AG04450 (cell line): ENCODE measurements at regions of chr11 and their contacts with region 1.

Region 1: GRCh38 chr11:66268283-66268951 is at the start of gene RAB1B:
- DNase-seq: peak; percentile 98
- H3K4me3 ChIP-seq: peak within 1 kb of the TSS; percentile 91
- H3K27ac ChIP-seq: peak within 1 kb of the TSS; percentile 89
- H3K27me3 ChIP-seq: no peaks in the 10 kb centered on the region
- CTCF ChIP-seq: no peak
- polyA plus RNA-seq, gene RAB1B: 127 and 183 TPM in 2 replicates

Region 2: DNA sequence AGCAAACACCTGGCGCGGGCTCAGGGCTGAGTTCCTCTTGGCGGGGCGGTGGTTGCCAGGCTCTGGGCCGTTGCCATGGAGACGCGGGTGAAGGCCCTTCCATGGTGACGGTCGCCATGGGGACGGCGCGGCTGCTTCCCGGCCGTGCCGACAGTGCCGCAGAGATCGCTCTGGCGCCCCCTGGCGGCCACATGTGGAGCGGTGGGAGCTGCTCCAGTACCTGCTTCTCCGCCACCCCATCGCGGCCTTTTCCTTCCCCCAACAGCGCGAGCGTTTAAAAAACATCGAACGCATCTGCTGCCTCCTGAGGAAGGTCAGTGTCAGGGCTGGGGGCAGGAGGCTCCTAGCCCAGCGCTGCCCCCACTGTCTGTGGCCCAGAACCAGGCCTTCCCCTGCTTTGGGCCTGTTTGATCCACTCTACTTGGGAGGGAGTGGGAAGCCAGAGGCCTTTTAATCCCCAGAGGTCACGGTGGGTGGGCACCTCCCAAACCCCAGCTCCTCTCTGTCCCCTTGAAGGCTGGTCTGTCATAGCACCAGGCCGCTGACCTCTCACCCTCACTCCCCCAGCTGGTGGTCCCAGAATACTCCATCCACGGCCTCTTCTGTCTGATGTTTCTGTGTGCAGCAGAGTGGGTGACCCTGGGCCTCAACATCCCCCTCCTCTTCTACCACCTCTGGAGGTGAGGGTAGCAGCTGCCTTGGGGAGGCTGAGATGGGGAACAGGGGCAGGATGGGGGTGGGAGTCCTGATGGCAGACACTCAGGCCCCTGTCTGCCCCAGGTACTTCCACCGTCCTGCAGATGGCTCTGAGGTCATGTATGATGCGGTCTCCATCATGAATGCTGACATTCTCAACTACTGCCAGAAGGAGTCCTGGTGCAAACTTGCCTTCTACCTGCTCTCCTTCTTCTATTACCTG is 14.3 kb after region 1 on chr11:
- CTCF ChIA-PET with region 1: interaction called, 18 read pairs
- POLR2A ChIA-PET with region 1: interaction called, 7 read pairs
- DNase-seq: peak; percentile 82
- H3K4me3 ChIP-seq: no peak overlapping the region
- H3K27ac ChIP-seq: no peak overlapping the region
- H3K27me3 ChIP-seq: no peaks in the 10 kb centered on the region
- CTCF ChIP-seq: peak; percentile 83